BJ (cell line): ENCODE measurements at regions of chr6 and their contacts with region 1.

Region 1: DNA sequence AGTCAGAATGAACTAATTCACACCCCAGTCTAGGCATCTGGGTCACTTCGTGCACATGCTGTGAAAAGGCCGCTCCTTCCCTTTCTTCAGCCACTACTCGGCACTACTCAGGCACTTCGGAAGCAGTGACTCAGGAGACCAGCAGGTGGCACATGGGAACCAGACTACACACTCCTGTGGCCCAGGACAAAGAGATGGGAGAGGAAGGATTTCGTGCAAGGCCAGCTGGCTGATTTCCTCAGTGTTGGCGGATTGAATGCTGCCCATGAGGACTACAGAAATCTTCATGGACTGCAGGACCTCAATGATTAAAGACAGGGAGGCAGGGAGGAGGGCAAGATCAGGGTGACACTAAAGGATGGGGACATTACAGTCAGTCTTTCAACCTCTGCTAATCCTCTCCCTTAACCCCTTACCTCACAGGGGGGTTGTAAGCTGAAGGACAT is 117.8 kb upstream of the SPACA1 start:
- DNase-seq: peak; percentile 23
- H3K4me3 ChIP-seq: no peak overlapping the region
- H3K27me3 ChIP-seq: peaks cover 5% of the 10 kb centered on the region; the same call in 1 of the 2 replicates
- CTCF ChIP-seq: peak; percentile 95

Region 2: DNA sequence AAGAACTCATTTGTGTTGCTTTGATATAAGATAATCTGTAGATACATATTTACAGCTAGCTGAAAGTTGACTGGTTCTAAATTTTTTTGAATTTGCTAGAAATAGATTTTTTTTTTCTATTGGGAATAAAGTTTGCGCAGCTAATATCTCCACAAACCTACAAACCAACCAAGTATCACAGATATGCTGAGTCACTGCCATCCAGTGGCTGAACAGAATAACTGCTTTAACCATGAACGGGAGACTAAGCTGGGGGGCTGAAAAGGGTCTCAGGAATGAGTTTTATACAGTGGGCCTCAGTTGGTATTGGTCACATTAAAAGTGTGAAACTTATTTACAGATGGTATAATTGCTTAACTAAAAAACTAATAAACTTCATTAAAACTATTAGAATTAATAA is 563.0 kb after region 1 on chr6:
- CTCF ChIA-PET with region 1: interaction called, 25 read pairs
- POLR2A ChIA-PET with region 1: no interaction called
- DNase-seq: no peak
- H3K4me3 ChIP-seq: no peak overlapping the region
- H3K27me3 ChIP-seq: 0 out of 2 replicates have a peak, but pooled peaks cover 2% of the 10 kb centered on the region
- CTCF ChIP-seq: peak; percentile 56

Region 3: DNA sequence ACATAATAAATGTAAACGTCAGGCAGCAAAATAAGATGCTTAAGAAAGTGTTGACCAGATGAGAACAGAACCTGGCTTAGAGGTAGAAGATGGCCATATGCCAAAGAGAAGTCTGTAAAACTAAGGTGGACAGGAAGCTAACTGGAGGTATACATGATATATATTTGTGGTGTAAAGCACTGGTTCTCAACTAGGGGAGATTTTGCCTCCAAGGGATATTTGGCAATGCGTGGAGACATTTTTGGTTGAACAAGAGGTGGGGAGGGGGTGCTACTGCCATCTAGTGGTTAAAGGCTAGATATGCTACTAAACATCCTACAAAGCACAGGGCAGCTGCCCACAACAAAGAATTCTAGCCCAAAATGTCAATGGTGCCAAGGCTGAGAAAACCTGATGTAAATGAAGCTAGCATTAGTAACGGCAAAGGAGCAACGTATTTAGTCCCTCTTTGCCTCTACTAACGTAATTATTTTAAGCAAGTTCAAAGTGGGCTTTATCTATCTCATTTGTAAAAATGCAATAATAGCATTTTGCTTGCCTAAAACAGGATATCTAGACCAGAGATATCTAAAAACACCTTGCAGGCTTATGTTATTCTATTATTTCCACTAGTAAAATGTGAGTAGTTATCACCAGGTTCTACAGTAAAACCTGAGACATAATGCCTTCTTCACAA is 851.0 kb after region 1 on chr6:
- CTCF ChIA-PET with region 1: interaction called, 14 read pairs
- POLR2A ChIA-PET with region 1: no interaction called
- DNase-seq: peak; percentile 5
- H3K4me3 ChIP-seq: no peak overlapping the region
- H3K27me3 ChIP-seq: no peaks in the 10 kb centered on the region
- CTCF ChIP-seq: peak; percentile 92

Region 4: GRCh38 chr6:88870717-88871330 is 941.0 kb after region 1 on chr6:
- CTCF ChIA-PET with region 1: interaction called, 23 read pairs
- POLR2A ChIA-PET with region 1: no interaction called
- DNase-seq: no peak
- H3K4me3 ChIP-seq: no peak overlapping the region
- H3K27me3 ChIP-seq: no peaks in the 10 kb centered on the region
- CTCF ChIP-seq: peak; percentile 41